ENCODE measurements at regions of chr19 and their contacts with region 1.

Region 1: GRCh38 chr19:633068-633785 is at the start of gene POLRMT:
- DNase-seq: peak; percentile 98 to 99 (median 98)
- H3K4me3 ChIP-seq: peak within 1 kb of the TSS; percentile 72 to 99 (median 81)
- H3K4me3 Mint-ChIP-seq: peak within 1 kb of the TSS; percentile 94 to 98
- H3K27ac ChIP-seq: peak within 1 kb of the TSS in 1 of 2 donors; percentile 69
- H3K27ac Mint-ChIP-seq: peak within 1 kb of the TSS; percentile 75 to 90 (median 85)
- H3K4me1 ChIP-seq: peaks cover 18 to 26% of the 10 kb centered on the region in 2 donors
- H3K4me1 Mint-ChIP-seq: peaks cover 24% of the 10 kb centered on the region
- H3K27me3 ChIP-seq: peaks cover 0 to 2% of the 10 kb centered on the region in 2 donors
- H3K27me3 Mint-ChIP-seq: peaks cover 13 to 17% (median 14%) of the 10 kb centered on the region in 3 donors
- CTCF ChIP-seq: no peak
- polyA plus RNA-seq, gene POLRMT: 16.2 to 40.5 (median 17.6) TPM

Region 2: DNA sequence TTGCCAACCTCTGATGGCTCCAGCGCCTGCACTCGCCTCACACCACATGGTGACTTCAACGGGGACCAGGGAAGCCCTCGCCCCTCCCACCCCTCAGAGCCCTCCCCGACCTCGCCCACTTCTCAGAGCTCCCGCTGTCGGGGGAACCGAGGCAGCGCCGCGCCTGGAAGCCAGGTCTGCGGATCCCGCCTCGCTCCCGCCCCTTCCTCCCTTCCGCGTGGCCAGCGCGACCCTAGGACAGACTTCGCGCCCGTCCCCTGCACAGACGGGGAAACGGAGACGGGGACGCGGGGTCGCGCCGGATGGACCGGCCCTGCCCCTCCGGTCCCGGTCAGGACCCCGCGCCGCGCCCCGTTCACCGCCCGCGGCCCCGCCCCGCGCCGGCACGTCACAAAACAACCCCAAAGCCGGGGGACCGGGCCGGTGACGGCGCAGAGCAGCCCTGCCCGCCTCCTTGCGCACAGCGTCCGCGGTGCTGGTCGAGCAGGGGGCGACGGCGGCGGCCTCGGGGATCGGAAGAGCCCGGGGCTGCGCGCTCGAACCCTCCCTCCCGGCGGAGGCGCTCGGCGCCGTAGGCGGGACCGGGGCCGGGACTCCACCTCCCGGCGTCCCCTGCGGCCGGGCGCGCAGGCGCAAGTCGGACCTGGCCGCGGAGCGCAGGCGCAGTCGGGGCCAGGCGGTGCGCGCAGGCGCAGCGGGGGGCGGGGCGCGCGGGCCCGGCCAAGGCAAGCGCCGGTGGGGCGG is 102.0 kb before region 1 on chr19:
- intact Hi-C with region 1: loop called in 1 of 2 experiments (anchors 10 kb)
- DNase-seq: peak; percentile 70 to 77 (median 75)
- H3K4me3 ChIP-seq: peak overlapping the region; percentile 53 to 91 (median 77)
- H3K4me3 Mint-ChIP-seq: peak overlapping the region; percentile 80 to 84
- H3K27ac ChIP-seq: peak overlapping the region in 1 of 2 donors; percentile 82
- H3K27ac Mint-ChIP-seq: peak overlapping the region in 5 of 7 donors; percentile 45 to 89 (median 67)
- H3K4me1 ChIP-seq: peaks cover 24 to 27% of the 10 kb centered on the region in 2 donors
- H3K4me1 Mint-ChIP-seq: peaks cover 23% of the 10 kb centered on the region
- H3K27me3 ChIP-seq: peaks cover 0 to 1% of the 10 kb centered on the region in 2 donors
- H3K27me3 Mint-ChIP-seq: peaks cover under 1 to 4% (median 2%) of the 10 kb centered on the region in 3 donors
- CTCF ChIP-seq: no peak